Activated CD4-positive, alpha-beta T cell treated with anti-CD3 and anti-CD28 coated beads for 36 hours (primary cell): ENCODE measurements at regions of chr5 and their contacts with region 1.

Region 1: DNA sequence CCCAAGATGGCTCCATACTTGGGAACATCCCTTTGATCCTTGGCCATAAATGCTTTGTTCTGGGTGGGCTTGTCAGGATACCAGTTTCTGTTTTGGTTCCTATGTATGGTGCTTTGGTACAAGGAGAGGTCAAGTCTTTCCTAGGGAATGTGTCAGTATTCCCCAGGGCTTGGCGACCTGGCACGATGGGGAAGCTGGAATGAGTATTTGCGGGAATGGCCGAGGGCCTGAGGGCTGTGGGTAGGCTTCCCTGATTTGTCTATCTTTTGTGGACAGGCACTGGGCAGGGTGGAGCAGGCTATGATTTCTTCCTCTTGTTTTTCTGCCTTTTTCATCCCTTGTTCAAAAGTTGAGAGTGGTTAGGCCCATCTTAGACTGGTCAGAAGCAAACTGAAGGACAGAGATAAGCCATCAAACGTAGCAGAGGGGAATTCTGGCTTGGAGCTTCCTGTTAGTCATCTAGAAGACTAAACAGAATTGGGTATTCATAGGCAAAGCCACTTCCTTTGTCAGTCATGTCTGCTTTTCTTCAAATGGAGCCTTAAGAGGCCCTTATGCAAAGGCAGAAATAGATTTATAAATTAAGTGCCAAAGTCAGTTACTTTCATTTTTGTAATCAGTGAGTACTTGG is 13.7 kb downstream of the DOCK2 start:
- DNase-seq: peak; percentile 39
- ATAC-seq: peak; percentile 72
- H3K4me3 Mint-ChIP-seq: peak overlapping the region; percentile 56
- H3K27ac Mint-ChIP-seq: peak overlapping the region; percentile 97
- H3K4me1 Mint-ChIP-seq: peaks cover 98% of the 10 kb centered on the region
- H3K27me3 Mint-ChIP-seq: no peaks in the 10 kb centered on the region

Region 2: GRCh38 chr5:168831383-168831782 is 819.4 kb before region 1 on chr5:
- CTCF ChIA-PET with region 1: no interaction called
- POLR2A ChIA-PET with region 1: no interaction called
- intact Hi-C with region 1: loop called (anchors 2 to 10 kb)
- DNase-seq: no peak
- ATAC-seq: no peak
- H3K4me3 Mint-ChIP-seq: no peak overlapping the region
- H3K27ac Mint-ChIP-seq: no peak overlapping the region
- H3K4me1 Mint-ChIP-seq: peaks cover 36% of the 10 kb centered on the region
- H3K27me3 Mint-ChIP-seq: peaks cover 7% of the 10 kb centered on the region

Region 3: GRCh38 chr5:169637085-169637548 is 13.7 kb before region 1 on chr5 and contains the start of gene DOCK2:
- CTCF ChIA-PET with region 1: interaction called, 3 read pairs
- POLR2A ChIA-PET with region 1: interaction called, 7 read pairs
- intact Hi-C with region 1: loop called (anchors 1 kb)
- DNase-seq: peak; percentile 82
- ATAC-seq: peak; percentile 77
- H3K4me3 Mint-ChIP-seq: peak within 1 kb of the TSS; percentile 89
- H3K27ac Mint-ChIP-seq: peak within 1 kb of the TSS; percentile 94
- H3K4me1 Mint-ChIP-seq: peaks cover 46% of the 10 kb centered on the region
- H3K27me3 Mint-ChIP-seq: no peaks in the 10 kb centered on the region
- total RNA-seq, gene DOCK2: 189 to 198 TPM

Region 4: DNA sequence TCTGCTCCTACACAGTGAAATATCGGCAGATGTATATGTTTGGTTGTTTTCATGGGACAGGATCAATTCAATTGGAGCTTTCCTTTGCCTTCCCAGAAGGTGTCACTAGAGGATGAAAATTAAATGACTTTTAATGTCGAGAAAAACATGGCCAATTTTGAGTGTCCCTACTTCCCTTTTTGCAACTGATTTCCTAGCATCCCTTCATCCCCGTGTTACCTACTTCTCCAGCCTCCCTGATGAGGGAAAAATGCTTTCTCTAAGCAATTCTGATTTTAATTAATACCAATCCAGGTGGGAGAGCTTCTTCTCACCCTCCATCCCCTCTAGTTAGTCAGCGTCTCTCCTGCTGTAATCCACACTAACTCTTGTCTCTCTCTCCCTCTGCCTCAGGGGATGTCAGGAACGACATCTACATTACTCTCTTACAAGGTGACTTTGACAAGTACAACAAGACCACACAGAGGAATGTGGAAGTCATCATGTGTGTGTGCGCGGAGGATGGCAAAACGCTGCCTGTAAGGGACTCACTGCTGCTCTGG is 51.2 kb after region 1 on chr5:
- CTCF ChIA-PET with region 1: interaction called, 3 read pairs
- POLR2A ChIA-PET with region 1: no interaction called
- intact Hi-C with region 1: loop called (anchors 1 to 2 kb)
- DNase-seq: no peak
- ATAC-seq: no peak
- H3K4me3 Mint-ChIP-seq: no peak overlapping the region
- H3K27ac Mint-ChIP-seq: peak overlapping the region; percentile 76
- H3K4me1 Mint-ChIP-seq: peaks cover 44% of the 10 kb centered on the region
- H3K27me3 Mint-ChIP-seq: no peaks in the 10 kb centered on the region

Region 5: GRCh38 chr5:170571875-170572852 is 921.3 kb after region 1 on chr5:
- CTCF ChIA-PET with region 1: no interaction called
- POLR2A ChIA-PET with region 1: no interaction called
- intact Hi-C with region 1: loop called in 1 of 2 experiments (anchors 10 kb)
- DNase-seq: peak; percentile 90
- ATAC-seq: peak; percentile 97
- H3K4me3 Mint-ChIP-seq: no peak overlapping the region
- H3K27ac Mint-ChIP-seq: no peak overlapping the region
- H3K4me1 Mint-ChIP-seq: peaks cover 20% of the 10 kb centered on the region
- H3K27me3 Mint-ChIP-seq: peaks cover 62% of the 10 kb centered on the region